ENCODE measurements at regions of chr17 and their contacts with region 1.

Region 1: DNA sequence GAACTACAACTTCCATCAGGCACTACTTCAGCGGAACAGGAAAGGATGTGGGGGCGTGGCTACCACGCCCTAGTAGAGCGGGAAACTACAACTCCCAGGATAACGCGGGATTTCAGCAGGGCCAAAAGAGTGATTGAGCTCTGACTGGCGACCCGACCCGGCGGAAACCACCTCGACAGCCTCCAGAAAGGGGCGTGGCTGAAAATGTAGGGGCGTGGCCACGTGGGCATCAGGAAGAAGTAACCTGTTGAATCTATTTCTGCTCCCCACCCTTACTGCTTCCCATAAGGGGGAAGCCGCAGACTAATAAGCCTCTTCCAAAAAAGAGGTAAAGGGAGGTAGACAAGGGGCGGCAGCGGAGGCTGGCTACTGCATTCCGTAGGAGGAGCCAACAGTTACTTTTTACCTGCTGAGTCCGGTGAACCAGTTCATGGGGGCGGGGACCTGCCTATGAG is at the start of gene TMEM102:
- DNase-seq: peak; percentile 99
- ATAC-seq: peak; percentile 84
- H3K4me3 Mint-ChIP-seq: peak within 1 kb of the TSS; percentile 92
- H3K27ac Mint-ChIP-seq: peak within 1 kb of the TSS; percentile 92
- H3K4me1 Mint-ChIP-seq: peaks cover 33% of the 10 kb centered on the region
- H3K27me3 Mint-ChIP-seq: peaks cover 11% of the 10 kb centered on the region
- total RNA-seq, gene TMEM102: 8.7 to 10.7 TPM

Region 2: DNA sequence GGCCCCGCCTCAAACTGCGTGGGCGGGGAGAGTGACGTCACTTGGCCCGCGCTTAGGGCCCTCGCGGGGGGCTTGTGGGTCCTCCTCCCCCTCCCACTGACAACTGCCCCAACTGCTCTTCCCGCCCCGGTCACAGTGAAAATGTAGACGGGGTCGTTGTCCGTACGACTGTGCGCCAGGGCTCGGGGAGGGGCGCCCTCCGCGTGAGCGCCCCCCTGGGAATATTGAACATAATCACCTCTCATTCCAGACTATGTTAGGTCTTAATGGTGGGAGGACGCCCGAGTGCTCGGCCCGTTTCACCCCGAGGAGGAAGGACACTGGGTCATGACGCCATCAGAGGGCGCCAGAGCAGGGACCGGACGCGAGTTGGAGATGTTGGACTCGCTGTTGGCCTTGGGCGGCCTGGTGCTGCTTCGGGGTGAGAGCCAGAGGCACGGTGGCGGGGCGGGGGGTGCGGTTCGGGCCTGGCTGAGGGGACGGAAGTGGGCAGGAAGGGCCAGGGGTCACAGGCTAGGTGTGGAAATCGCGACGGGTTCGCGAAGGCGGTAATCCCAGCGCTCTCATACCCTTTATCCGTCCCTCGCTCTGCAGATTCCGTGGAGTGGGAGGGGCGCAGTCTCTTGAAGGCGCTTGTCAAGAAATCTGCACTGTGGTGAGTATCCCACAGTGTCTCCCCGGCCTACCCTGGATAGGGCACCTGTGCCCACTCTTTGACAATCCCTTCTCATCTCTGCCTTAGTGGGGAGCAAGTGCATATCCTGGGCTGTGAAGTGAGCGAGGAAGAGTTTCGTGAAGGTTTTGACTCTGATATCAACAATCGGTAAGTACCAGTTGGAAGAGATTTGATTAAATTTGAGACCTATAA is 182.8 kb before region 1 on chr17 and contains the start of gene ELP5:
- CTCF ChIA-PET with region 1: no interaction called
- POLR2A ChIA-PET with region 1: no interaction called
- intact Hi-C with region 1: loop called in 1 of 2 experiments (anchors 1 kb)
- DNase-seq: peak; percentile 94
- ATAC-seq: peak; percentile 65
- H3K4me3 Mint-ChIP-seq: peak within 1 kb of the TSS; percentile 93
- H3K27ac Mint-ChIP-seq: peak within 1 kb of the TSS; percentile 99
- H3K4me1 Mint-ChIP-seq: peaks cover 40% of the 10 kb centered on the region
- H3K27me3 Mint-ChIP-seq: no peaks in the 10 kb centered on the region
- total RNA-seq, gene ELP5: 58.1 to 62.3 TPM

Region 3: DNA sequence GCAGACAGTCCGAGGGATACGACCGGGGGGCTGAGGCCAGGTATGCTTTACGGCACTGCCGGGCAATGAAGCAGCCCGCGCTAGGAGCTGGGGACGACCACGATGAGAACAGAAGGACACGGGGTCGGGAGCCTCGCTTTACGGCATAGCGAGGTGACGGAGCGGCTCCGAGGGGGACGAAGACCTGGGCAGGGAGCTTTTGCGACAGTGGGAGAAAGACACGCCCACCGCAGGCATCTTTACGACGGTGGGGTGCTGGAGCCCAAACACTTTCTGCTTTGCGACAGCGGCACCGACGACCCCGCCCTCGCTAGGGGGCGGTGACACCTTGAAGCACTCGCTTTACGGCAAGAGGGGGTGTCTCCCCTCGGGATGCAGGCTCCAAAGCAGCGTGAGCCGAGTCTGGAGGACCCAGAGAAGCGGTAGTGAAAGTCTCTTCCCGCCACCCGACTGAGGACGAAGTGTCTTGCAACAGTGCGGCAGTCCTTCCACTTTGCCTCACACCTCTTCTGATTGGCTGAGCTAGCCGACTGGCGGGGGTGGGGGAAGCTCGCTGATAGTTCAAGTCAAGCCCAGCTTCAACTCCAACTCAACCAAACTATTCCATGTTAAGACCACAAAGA is 105.8 kb before region 1 on chr17:
- CTCF ChIA-PET with region 1: interaction called, 5 read pairs
- POLR2A ChIA-PET with region 1: no interaction called
- intact Hi-C with region 1: loop called in 1 of 2 experiments (anchors 1 kb)
- DNase-seq: peak; percentile 98
- ATAC-seq: peak; percentile 69
- H3K4me3 Mint-ChIP-seq: peak overlapping the region; percentile 89
- H3K27ac Mint-ChIP-seq: peak overlapping the region; percentile 96
- H3K4me1 Mint-ChIP-seq: peaks cover 44% of the 10 kb centered on the region
- H3K27me3 Mint-ChIP-seq: no peaks in the 10 kb centered on the region

Region 4: GRCh38 chr17:7403977-7404736 is 31.1 kb before region 1 on chr17 and contains the start of gene TMEM256:
- CTCF ChIA-PET with region 1: interaction called, 13 read pairs
- POLR2A ChIA-PET with region 1: interaction called, 13 read pairs
- intact Hi-C with region 1: loop called (anchors 1 kb)
- DNase-seq: peak; percentile 99
- ATAC-seq: peak; percentile 94
- H3K4me3 Mint-ChIP-seq: peak within 1 kb of the TSS; percentile 89
- H3K27ac Mint-ChIP-seq: peak within 1 kb of the TSS; percentile 92
- H3K4me1 Mint-ChIP-seq: peaks cover 16% of the 10 kb centered on the region
- H3K27me3 Mint-ChIP-seq: peaks cover 2% of the 10 kb centered on the region
- total RNA-seq, gene TMEM256: 55.8 to 58.1 TPM

Region 5: DNA sequence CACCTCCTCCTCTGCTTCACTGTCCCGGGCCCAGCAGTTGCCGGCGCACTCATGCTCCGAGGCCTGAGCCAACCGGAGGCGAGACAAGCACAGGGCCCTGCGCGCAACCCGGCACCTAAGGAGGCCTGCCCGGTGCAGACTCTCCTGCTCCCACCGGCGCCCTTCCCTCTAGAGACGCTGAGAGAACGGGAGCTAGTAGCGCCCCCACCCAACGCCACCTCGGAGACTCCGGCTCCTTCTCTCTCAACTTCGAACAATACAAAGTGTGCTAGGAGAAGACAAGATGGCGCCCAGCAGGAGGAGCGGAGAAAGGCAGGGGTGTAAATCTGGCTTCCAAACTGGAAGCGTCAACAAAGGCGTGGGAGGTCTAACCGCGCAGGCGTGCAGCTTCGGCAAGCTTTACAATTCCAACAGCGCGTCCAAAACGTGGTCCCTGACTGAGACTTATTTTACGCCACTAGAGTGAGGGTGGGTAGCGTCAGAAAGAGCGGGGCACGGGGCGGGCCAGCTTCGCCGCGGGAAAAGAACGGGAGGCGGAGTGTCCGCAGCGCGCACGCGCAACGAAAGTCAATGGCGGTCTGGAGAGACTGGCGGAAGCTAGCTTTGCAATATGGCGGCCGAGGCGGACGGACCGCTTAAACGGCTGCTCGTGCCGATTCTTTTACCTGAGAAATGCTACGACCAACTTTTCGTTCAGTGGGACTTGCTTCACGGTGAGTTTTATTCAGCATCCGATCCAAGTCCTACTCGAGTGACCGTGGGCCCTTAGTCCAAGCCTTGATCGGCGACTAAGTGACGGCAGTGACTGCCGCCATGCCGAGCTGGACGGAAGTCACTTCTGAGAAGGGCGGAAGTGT is 148.2 kb after region 1 on chr17 and contains the start of gene MPDU1:
- CTCF ChIA-PET with region 1: interaction called, 7 read pairs
- POLR2A ChIA-PET with region 1: interaction called, 7 read pairs
- intact Hi-C with region 1: loop called in 1 of 2 experiments (anchors 1 kb)
- DNase-seq: peak; percentile 98
- ATAC-seq: peak; percentile 77
- H3K4me3 Mint-ChIP-seq: peak within 1 kb of the TSS; percentile 82
- H3K27ac Mint-ChIP-seq: peak within 1 kb of the TSS; percentile 100
- H3K4me1 Mint-ChIP-seq: peaks cover 56% of the 10 kb centered on the region
- H3K27me3 Mint-ChIP-seq: no peaks in the 10 kb centered on the region
- total RNA-seq, gene MPDU1: 51.7 to 77.0 TPM